ENCODE measurements at regions of chr4 and their contacts with region 1.

Region 1: GRCh38 chr4:17614416-17615299 is at the start of gene MED28:
- DNase-seq: peak; percentile 89
- H3K4me3 ChIP-seq: peak within 1 kb of the TSS; percentile 59 to 93 (median 78)
- H3K27ac ChIP-seq: peak within 1 kb of the TSS; percentile 86
- H3K4me1 ChIP-seq: peaks cover 12% of the 10 kb centered on the region
- H3K27me3 ChIP-seq: no peaks in the 10 kb centered on the region
- CTCF ChIP-seq: no peak
- total RNA-seq, gene MED28: 10.7 to 30.8 TPM

Region 2: DNA sequence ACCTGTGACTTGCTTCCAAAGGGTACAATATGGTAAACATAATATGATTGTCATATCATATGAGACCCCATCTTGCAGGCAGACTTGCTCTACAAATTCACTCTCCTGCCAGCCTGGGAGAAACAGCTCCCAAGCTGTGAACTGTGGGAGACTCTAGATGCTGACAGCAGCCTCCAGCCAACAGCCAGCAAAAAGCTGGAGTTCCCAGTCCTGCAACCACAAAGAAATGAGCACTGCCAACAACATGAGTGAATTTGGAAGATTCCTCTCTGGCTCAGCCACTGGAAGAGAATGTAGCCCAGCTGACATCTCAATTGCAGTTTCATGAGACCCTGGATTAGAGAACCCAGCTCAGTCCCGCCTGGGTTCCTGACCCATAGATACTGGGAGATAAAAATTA is 248.2 kb before region 1 on chr4:
- CTCF ChIA-PET with region 1: no interaction called
- dilution Hi-C with region 1: no loop called
- in situ Hi-C with region 1: no loop called
- intact Hi-C with region 1: no loop called
- DNase-seq: no peak
- H3K4me3 ChIP-seq: no peak overlapping the region
- H3K27ac ChIP-seq: no peak overlapping the region
- H3K4me1 ChIP-seq: no peaks in the 10 kb centered on the region
- H3K27me3 ChIP-seq: no peaks in the 10 kb centered on the region
- CTCF ChIP-seq: no peak

Region 3: GRCh38 chr4:17576932-17577665 is 37.6 kb before region 1 on chr4 and contains the start of gene LAP3:
- CTCF ChIA-PET with region 1: no interaction called
- dilution Hi-C with region 1: loop called (anchors 5 kb)
- in situ Hi-C with region 1: no loop called
- intact Hi-C with region 1: no loop called
- DNase-seq: peak; percentile 95
- H3K4me3 ChIP-seq: peak within 1 kb of the TSS; percentile 72 to 84 (median 72)
- H3K27ac ChIP-seq: peak within 1 kb of the TSS; percentile 89
- H3K4me1 ChIP-seq: peaks cover 6% of the 10 kb centered on the region
- H3K27me3 ChIP-seq: no peaks in the 10 kb centered on the region
- CTCF ChIP-seq: no peak
- total RNA-seq, gene LAP3: 36.1 to 69.5 TPM

Region 4: DNA sequence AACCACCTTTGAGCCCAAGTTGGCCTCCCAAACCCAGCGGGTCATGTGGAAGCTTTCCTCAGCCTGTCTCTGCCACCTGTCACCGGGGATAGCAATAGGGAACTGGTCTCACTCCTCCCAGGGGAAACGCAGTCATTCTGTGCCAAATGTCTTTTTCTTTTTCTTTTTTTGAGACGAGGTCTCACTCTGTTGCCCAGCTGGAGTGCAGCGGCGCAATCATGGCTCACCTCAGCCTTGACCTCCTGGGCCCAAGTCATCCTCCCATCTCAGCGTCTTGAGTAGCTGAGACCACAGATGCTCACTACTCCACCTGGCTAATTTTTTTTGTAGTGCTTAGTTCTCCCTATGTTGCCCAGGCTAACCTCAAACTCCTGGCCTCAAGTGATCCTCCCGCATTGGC is 40.0 kb after region 1 on chr4:
- CTCF ChIA-PET with region 1: no interaction called
- dilution Hi-C with region 1: no loop called
- in situ Hi-C with region 1: no loop called
- intact Hi-C with region 1: no loop called
- DNase-seq: no peak
- H3K4me3 ChIP-seq: no peak overlapping the region
- H3K27ac ChIP-seq: no peak overlapping the region
- H3K4me1 ChIP-seq: no peaks in the 10 kb centered on the region
- H3K27me3 ChIP-seq: no peaks in the 10 kb centered on the region
- CTCF ChIP-seq: no peak